Activated CD4-positive, alpha-beta memory T cell treated with anti-CD3 and anti-CD28 coated beads for 36 hours (primary cell): ENCODE measurements at regions of chr22 and their contacts with region 1.

Region 1: DNA sequence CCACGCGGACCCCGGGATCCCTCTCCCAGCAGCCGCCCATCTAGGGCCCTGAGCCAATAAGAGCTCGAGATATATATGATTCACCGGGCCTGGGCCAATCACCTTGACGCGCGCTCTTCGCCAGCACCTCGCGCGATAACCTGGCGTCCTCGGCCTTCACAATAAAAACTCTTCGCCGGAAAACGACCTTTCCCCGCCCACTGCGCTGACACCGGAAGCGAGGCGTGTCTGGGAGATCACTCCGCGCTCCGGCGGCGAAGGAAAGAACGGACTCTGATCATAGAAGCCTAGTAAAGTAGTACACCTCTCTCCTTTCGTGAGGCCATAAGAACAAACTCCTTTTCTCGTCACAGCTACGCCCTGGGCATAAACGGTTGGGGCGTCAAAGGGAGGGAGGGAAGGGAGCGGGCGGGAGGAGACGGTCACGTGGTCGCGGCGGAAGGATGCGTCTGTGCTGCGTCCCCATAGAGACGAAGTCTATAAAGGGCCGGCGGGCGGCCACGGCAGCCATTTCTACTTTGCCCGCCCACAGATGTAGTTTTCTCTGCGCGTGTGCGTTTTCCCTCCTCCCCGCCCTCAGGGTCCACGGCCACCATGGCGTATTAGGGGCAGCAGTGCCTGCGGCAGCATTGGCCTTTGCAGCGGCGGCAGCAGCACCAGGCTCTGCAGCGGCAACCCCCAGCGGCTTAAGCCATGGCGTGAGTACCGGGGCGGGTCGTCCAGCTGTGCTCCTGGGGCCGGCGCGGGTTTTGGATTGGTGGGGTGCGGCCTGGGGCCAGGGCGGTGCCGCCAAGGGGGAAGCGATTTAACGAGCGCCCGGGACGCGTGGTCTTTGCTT is at the start of gene ATF4:
- DNase-seq: peak; percentile 98
- H3K4me3 Mint-ChIP-seq: peak within 1 kb of the TSS; percentile 84
- H3K27ac Mint-ChIP-seq: peak within 1 kb of the TSS; percentile 98
- H3K4me1 Mint-ChIP-seq: peaks cover 50% of the 10 kb centered on the region
- H3K27me3 Mint-ChIP-seq: peaks cover 4% of the 10 kb centered on the region
- total RNA-seq, gene ATF4: 437 to 455 TPM

Region 2: DNA sequence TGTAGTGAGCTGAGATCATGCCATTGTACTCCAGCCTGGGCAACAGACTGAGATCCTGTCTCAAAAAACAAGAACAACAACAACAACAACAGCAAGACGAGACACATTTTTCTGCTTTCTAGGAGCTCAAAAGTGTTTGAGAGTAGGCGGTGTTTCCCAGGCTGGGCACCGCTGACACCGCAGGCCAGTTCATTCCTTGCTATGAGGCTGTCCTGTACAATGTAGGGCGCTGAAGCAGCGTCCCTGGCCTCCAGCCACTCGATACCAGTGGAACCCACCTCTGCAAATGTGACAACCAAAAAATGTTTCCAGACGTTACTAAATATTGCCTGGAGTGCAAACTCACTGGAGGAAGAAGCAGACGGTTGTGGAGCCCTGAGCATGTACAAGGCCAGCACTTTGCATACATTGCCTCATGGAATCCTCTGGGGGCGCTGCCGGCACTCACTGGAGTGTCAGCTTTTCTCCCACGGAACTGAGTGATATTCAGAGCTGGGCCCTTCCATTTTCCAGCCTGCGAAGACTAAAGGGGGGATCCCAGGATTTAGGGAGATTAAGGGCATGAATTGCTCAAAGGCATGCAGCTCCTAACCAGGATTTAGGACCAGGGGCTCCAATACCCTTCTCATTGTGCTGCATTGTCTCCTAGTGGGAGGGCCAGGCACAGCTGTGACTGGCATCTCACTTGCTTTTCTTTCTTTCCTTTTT is 24.0 kb before region 1 on chr22:
- CTCF ChIA-PET with region 1: interaction called, 387 read pairs
- POLR2A ChIA-PET with region 1: interaction called, 20 read pairs
- intact Hi-C with region 1: no loop called
- DNase-seq: peak; percentile 76
- H3K4me3 Mint-ChIP-seq: no peak overlapping the region
- H3K27ac Mint-ChIP-seq: no peak overlapping the region
- H3K4me1 Mint-ChIP-seq: peaks cover 9% of the 10 kb centered on the region
- H3K27me3 Mint-ChIP-seq: no peaks in the 10 kb centered on the region

Region 3: GRCh38 chr22:39502109-39502788 is 18.0 kb before region 1 on chr22 and contains the start of gene MIEF1:
- CTCF ChIA-PET with region 1: interaction called, 387 read pairs
- POLR2A ChIA-PET with region 1: interaction called, 20 read pairs
- intact Hi-C with region 1: loop called (anchors 1 kb)
- DNase-seq: peak; percentile 98
- H3K4me3 Mint-ChIP-seq: peak within 1 kb of the TSS; percentile 96
- H3K27ac Mint-ChIP-seq: peak within 1 kb of the TSS; percentile 87
- H3K4me1 Mint-ChIP-seq: peaks cover 43% of the 10 kb centered on the region
- H3K27me3 Mint-ChIP-seq: no peaks in the 10 kb centered on the region
- total RNA-seq, gene MIEF1: 40.3 to 43.1 TPM

Region 4: GRCh38 chr22:39543095-39543494 is 22.8 kb after region 1 on chr22:
- CTCF ChIA-PET with region 1: no interaction called
- POLR2A ChIA-PET with region 1: no interaction called
- intact Hi-C with region 1: no loop called
- DNase-seq: peak; percentile 50
- H3K4me3 Mint-ChIP-seq: no peak overlapping the region
- H3K27ac Mint-ChIP-seq: no peak overlapping the region
- H3K4me1 Mint-ChIP-seq: peaks cover 14% of the 10 kb centered on the region
- H3K27me3 Mint-ChIP-seq: peaks cover 28% of the 10 kb centered on the region